SK-N-SH (cell line): ENCODE measurements at regions of chr7 and their contacts with region 1.

Region 1: GRCh38 chr7:15326044-15326644 is 235.7 kb downstream of the AGMO start:
- DNase-seq: peak; percentile 32
- H3K4me3 ChIP-seq: no peak overlapping the region
- H3K27ac ChIP-seq: no peak overlapping the region
- H3K4me1 ChIP-seq: no peaks in the 10 kb centered on the region; a peak in 1 of 4 replicates
- H3K27me3 ChIP-seq: no peaks in the 10 kb centered on the region
- CTCF ChIP-seq: peak; percentile 96
- EP300 ChIP-seq: no peak
- RAD21 ChIP-seq: peak; percentile 88

Region 2: DNA sequence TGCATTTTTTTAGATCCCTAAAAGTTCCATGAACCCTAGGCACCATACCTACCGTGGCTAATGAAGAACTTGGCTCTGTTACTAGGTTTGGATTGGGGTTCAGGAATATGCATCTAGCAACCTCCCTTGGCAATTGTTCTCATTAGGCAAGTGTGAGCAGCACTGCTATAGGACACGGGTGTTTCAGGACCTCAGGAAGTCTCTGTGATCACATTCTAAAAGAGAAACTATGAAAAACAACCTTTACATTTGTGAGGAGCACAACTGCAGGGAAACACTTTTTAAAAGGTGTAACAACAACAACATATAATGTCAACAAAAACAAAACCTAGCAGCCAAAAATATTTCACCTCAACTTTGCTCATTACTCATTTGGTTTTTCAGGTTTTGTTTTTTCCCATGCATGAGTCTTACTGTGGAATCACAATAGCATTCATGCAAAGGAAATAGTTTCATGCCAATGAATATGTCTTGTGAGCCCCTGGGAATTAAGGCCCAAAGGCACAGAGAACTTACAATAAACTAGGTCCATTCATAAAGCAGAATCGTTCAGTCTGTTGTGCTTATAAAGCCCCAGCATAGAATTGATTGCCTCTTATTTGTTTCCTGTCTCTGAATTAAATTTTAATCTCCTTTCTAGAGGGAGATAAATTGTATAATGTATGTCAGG is 167.9 kb before region 1 on chr7:
- CTCF ChIA-PET with region 1: no interaction called
- POLR2A ChIA-PET with region 1: no interaction called
- DNase-seq: no peak
- H3K4me3 ChIP-seq: no peak overlapping the region
- H3K27ac ChIP-seq: no peak overlapping the region
- H3K4me1 ChIP-seq: peaks cover 0 to 5% of the 10 kb centered on the region in 2 experiments; a peak in 3 of 4 replicates
- H3K27me3 ChIP-seq: no peaks in the 10 kb centered on the region
- CTCF ChIP-seq: no peak
- EP300 ChIP-seq: no peak
- RAD21 ChIP-seq: no peak

Region 3: DNA sequence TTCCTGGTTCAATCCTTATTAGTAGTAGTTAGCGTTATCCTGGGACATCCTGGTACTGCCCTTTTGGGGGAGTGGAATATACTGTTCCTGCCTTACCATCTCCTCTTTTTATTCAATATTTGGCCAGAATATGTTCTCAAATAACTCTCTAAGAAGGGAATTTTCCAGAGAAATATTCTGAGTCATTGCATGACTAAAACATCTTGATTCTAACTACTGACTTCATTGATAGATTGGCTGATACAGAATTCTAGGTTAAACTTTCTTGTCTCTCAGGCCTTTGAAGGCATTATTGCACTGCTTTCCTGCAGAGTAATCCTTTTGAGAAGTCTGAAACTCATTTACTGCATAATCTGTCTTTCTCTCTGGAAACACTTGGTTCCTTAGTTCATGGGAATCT is 148.1 kb before region 1 on chr7:
- CTCF ChIA-PET with region 1: no interaction called
- POLR2A ChIA-PET with region 1: no interaction called
- DNase-seq: no peak
- H3K4me3 ChIP-seq: no peak overlapping the region
- H3K27ac ChIP-seq: peak overlapping the region in 1 of 2 experiments; percentile 70; a peak in 2 of 4 replicates
- H3K4me1 ChIP-seq: peaks cover 0 to 4% of the 10 kb centered on the region in 2 experiments; a peak in 1 of 4 replicates
- H3K27me3 ChIP-seq: no peaks in the 10 kb centered on the region
- CTCF ChIP-seq: no peak
- EP300 ChIP-seq: peak in 1 of 2 experiments; percentile 55; a peak in 1 of 4 replicates
- RAD21 ChIP-seq: no peak

Region 4: DNA sequence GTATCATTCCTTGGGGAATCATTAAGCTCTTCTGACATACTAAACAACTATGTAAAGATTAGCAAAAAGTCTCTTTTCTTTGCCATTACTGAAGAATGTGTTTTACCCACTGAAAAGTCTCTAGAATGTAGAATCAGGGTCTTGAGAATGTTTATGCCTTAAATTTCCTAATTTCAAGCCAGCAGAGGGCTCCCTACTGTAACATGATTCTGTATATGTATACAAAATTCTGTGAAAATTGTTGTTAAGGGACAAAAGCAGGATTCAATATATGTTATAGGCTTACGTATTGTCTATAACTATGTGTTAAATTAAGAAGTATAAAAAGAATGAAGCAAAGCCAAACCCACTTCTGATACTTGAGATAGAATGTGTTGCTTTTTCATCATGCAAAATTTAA is 126.7 kb before region 1 on chr7:
- CTCF ChIA-PET with region 1: no interaction called
- POLR2A ChIA-PET with region 1: no interaction called
- DNase-seq: peak; percentile 11
- H3K4me3 ChIP-seq: no peak overlapping the region
- H3K27ac ChIP-seq: peak overlapping the region in 1 of 2 experiments; percentile 96; a peak in 1 of 4 replicates
- H3K4me1 ChIP-seq: peaks cover 11 to 17% of the 10 kb centered on the region in 2 experiments; a peak in 3 of 4 replicates
- H3K27me3 ChIP-seq: no peaks in the 10 kb centered on the region
- CTCF ChIP-seq: peak; percentile 79
- EP300 ChIP-seq: no peak
- RAD21 ChIP-seq: peak; percentile 57

Region 5: GRCh38 chr7:15345216-15345615 is 19.1 kb after region 1 on chr7:
- CTCF ChIA-PET with region 1: no interaction called
- POLR2A ChIA-PET with region 1: no interaction called
- DNase-seq: no peak
- H3K4me3 ChIP-seq: no peak overlapping the region
- H3K27ac ChIP-seq: no peak overlapping the region
- H3K4me1 ChIP-seq: no peaks in the 10 kb centered on the region
- H3K27me3 ChIP-seq: no peaks in the 10 kb centered on the region
- CTCF ChIP-seq: no peak
- EP300 ChIP-seq: no peak
- RAD21 ChIP-seq: no peak

Region 6: GRCh38 chr7:15555381-15555859 is 229.3 kb after region 1 on chr7:
- CTCF ChIA-PET with region 1: interaction called, 10 read pairs
- POLR2A ChIA-PET with region 1: no interaction called
- DNase-seq: peak; percentile 12
- H3K4me3 ChIP-seq: no peak overlapping the region
- H3K27ac ChIP-seq: no peak overlapping the region
- H3K4me1 ChIP-seq: peaks cover 3 to 10% of the 10 kb centered on the region in 2 experiments; a peak in 3 of 4 replicates
- H3K27me3 ChIP-seq: no peaks in the 10 kb centered on the region
- CTCF ChIP-seq: peak; percentile 71
- EP300 ChIP-seq: no peak
- RAD21 ChIP-seq: peak; percentile 68